ENCODE measurements at regions of chr6 and their contacts with region 1.

Region 1: GRCh38 chr6:35351410-35351809 is 9.1 kb downstream of the PPARD start:
- DNase-seq: no peak
- H3K4me3 Mint-ChIP-seq: no peak overlapping the region
- H3K27ac Mint-ChIP-seq: no peak overlapping the region
- H3K4me1 Mint-ChIP-seq: no peaks in the 10 kb centered on the region
- H3K27me3 Mint-ChIP-seq: no peaks in the 10 kb centered on the region
- CTCF ChIP-seq: no peak

Region 2: DNA sequence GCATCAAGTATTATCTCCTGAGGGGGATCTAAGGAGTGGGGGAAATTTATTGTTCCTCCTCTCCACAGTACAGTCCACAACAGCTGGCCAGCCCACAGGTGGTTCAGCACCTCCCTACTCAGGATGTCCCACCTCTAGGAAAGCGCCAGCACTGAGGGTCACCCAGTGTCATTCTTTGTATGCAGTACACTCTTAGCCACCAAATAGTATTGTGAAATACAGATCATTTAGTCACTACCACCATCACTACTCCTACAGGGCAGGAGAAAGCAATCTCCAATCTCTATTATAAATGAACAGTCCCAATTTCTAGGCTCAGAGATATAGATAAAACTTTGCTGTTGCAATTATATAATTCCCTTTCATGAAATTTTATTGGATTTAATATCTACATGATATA is 98.2 kb before region 1 on chr6:
- CTCF ChIA-PET with region 1: no interaction called
- intact Hi-C with region 1: no loop called
- DNase-seq: no peak
- H3K4me3 Mint-ChIP-seq: no peak overlapping the region
- H3K27ac Mint-ChIP-seq: no peak overlapping the region
- H3K4me1 Mint-ChIP-seq: no peaks in the 10 kb centered on the region
- H3K27me3 Mint-ChIP-seq: no peaks in the 10 kb centered on the region
- CTCF ChIP-seq: no peak

Region 3: GRCh38 chr6:35425284-35425683 is 73.9 kb after region 1 on chr6:
- CTCF ChIA-PET with region 1: interaction called, 10 read pairs
- intact Hi-C with region 1: no loop called
- DNase-seq: no peak
- H3K4me3 Mint-ChIP-seq: no peak overlapping the region
- H3K27ac Mint-ChIP-seq: no peak overlapping the region
- H3K4me1 Mint-ChIP-seq: no peaks in the 10 kb centered on the region
- H3K27me3 Mint-ChIP-seq: no peaks in the 10 kb centered on the region
- CTCF ChIP-seq: no peak